Heart left ventricle (tissue), 16 donors: ENCODE measurements at regions of chr1 and their contacts with region 1.

Region 1: DNA sequence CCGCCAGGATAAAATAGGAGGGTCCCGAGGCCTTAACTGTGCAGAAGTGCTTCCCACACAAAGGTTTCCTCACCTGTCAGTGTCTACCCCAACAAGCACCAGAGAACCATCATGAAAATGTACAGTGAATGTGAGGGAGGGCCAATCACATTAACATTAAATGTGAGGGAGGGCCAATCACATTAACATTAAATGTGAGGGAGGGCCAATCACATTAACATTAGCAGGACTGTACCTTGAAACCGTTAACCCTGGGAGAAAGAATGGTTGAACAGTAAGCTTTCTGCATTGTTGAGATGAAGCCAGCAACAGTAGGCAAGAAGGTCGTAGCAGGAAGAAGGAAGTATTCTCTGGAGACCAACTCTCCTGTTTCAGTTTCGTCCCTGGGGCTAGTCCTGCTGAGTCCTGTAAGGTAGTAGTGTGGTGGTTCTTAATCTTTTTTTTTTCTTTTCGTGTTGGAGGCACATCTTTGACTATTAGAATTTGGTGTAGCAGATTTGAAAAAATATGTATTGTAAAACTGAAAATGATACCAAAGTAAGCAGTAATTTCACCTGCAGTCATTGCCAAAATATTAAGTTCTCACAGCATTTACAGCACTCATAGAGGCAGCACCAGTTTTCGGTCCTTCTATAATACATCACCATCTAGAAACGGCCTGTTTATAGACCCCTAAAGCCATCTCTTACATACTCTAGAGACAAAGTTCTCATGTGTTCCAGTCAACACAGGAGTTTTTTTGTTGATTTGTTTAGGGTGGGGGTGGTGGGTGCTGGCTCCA is 98.6 kb upstream of the PPP2R5A start:
- DNase-seq: no peak
- ATAC-seq: peak in 2 of 4 donors; percentile 46 to 68
- H3K4me3 ChIP-seq: peak overlapping the region in 1 of 12 donors; percentile 16
- H3K27ac ChIP-seq: peak overlapping the region in 6 of 12 donors; percentile 37 to 62 (median 52)
- H3K4me1 ChIP-seq: peaks cover 0 to 33% (median 11%) of the 10 kb centered on the region in 12 donors
- H3K27me3 ChIP-seq: no peaks in the 10 kb centered on the region
- CTCF ChIP-seq: no peak
- POLR2A ChIP-seq: no peak

Region 2: DNA sequence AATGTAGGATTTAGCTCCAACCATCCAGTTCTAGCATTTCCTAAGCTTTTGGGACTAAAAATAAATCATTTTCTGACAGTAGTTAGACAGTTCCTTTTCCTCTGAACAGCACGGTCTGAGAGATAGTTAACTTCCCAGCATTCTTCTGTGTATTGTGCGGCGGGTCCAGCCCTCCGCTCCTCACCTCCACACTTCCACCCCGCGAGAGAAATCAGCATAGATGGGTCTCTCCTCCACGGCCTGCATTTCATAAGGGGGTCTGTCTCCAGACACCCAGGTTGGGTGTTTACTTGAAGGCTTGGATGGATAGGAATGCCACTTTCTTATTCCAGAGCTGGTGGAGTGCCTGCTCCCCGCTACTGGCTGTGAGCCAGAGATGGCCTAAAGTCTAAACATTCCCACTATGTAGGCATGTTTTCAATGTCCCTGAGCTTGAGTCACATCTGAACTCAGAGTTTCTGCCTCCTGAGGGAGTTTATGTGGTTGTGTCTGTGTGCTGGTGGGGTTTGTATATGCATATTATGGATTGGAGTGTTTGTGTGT is 60.6 kb after region 1 on chr1:
- intact Hi-C with region 1: loop called in 1 of 10 experiments (anchors 5 kb)
- DNase-seq: no peak
- ATAC-seq: peak in 3 of 4 donors; percentile 41 to 49 (median 48)
- H3K4me3 ChIP-seq: peak overlapping the region in 3 of 12 donors; percentile 3 to 30 (median 10)
- H3K27ac ChIP-seq: peak overlapping the region in 10 of 12 donors; percentile 8 to 64 (median 36)
- H3K4me1 ChIP-seq: peaks cover 0 to 31% (median 16%) of the 10 kb centered on the region in 12 donors
- H3K27me3 ChIP-seq: no peaks in the 10 kb centered on the region
- CTCF ChIP-seq: no peak
- POLR2A ChIP-seq: no peak